Calu3 (cell line): ENCODE measurements at regions of chr16 and their contacts with region 1.

Region 1: GRCh38 chr16:57091975-57092785 is at the start of gene CPNE2:
- DNase-seq: peak; percentile 73
- H3K4me3 Mint-ChIP-seq: peak within 1 kb of the TSS; percentile 73
- H3K27ac Mint-ChIP-seq: no peak within 1 kb of the TSS
- H3K4me1 Mint-ChIP-seq: peaks cover 11% of the 10 kb centered on the region
- H3K27me3 Mint-ChIP-seq: peaks cover 46% of the 10 kb centered on the region
- CTCF ChIP-seq: no peak
- total RNA-seq, gene CPNE2: 12.9 and 14.5 TPM in 2 replicates

Region 2: DNA sequence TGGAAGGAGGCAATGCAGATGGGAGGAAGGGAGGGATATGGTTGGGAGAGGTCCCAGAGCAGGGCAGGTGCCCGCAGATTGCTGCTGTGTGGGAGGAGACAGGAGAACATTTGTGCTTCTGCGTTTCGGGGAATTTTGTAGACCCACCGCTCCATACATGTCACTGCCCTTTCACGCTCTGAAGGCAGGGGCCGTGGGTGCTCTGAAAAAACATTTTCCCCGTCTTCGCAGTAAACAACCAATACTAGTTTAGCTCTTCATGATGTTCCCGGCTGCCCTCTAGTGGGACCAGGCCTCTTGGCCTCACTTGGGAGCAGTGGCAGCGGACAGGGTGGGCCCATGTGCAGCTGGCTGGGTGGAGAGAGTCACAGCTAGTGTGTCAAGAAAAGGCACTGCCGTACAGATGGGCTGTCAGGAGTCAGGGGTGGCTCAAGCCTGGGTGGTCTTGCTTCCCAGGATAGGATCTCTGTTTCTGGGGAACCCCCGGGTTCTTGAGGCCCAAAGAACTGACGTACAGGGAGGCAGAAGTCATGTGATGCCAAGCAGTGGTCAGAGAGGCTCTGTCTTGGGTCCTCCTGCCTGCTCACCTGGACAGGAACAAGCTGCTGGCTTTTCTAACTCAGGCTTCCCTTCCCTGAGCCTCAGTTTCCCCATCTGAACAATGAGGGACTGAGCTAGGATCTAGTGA is 46.3 kb before region 1 on chr16:
- CTCF ChIA-PET with region 1: no interaction called
- intact Hi-C with region 1: no loop called
- DNase-seq: no peak
- H3K4me3 Mint-ChIP-seq: no peak overlapping the region
- H3K27ac Mint-ChIP-seq: no peak overlapping the region
- H3K4me1 Mint-ChIP-seq: no peaks in the 10 kb centered on the region
- H3K27me3 Mint-ChIP-seq: no peaks in the 10 kb centered on the region
- CTCF ChIP-seq: no peak

Region 3: GRCh38 chr16:57422026-57422944 is 330.1 kb after region 1 on chr16:
- CTCF ChIA-PET with region 1: interaction called, 10 read pairs
- intact Hi-C with region 1: no loop called
- DNase-seq: peak; percentile 79
- H3K4me3 Mint-ChIP-seq: no peak overlapping the region
- H3K27ac Mint-ChIP-seq: no peak overlapping the region
- H3K4me1 Mint-ChIP-seq: peaks cover 34% of the 10 kb centered on the region
- H3K27me3 Mint-ChIP-seq: no peaks in the 10 kb centered on the region
- CTCF ChIP-seq: peak; percentile 86